ENCODE measurements at regions of chr10 and their contacts with region 1.

Region 1: DNA sequence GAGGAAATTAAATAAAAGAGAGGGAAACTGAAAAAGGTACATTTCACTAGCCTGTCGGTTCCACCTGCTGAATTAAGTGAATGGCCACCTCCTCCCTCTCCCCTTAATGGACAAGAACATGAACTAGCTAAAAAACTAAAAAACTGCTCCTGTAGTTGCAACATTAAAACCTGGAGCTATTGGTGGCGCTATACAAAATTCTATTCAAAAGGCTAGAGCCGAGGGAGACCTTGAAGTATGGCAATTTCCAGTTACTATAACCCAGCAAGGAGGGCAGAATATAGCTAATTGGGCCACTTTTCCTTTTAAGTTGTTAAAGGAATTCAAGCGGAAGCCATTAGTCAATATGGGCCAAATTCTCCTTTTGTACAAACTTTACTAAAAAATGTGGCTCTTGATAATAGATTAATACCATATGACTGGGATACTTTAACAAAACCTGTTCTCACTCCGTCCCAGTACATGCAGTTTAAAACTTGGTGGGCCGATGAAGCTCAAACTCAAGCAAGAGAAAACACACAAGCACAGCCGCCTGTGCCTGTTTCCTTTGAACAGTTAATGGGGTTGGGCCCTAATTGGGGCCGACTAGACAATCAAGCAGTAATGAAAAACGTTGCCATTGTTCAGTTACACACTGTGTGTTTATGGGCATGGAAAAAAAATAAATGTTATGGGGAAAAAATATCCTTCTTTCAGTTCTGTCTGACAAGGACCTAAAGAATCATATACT is 6.5 kb upstream of the CHST3 start:
- DNase-seq: no peak
- ATAC-seq: no peak
- H3K4me3 ChIP-seq: no peak overlapping the region
- H3K27ac ChIP-seq: no peak overlapping the region
- H3K4me1 ChIP-seq: peaks cover 3% of the 10 kb centered on the region
- H3K27me3 ChIP-seq: no peaks in the 10 kb centered on the region

Region 2: GRCh38 chr10:72043016-72043834 is 85.5 kb after region 1 on chr10:
- intact Hi-C with region 1: loop called (anchors 2 to 5 kb)
- DNase-seq: no peak
- ATAC-seq: no peak
- H3K4me3 ChIP-seq: no peak overlapping the region
- H3K27ac ChIP-seq: no peak overlapping the region
- H3K4me1 ChIP-seq: no peaks in the 10 kb centered on the region
- H3K27me3 ChIP-seq: no peaks in the 10 kb centered on the region

Region 3: GRCh38 chr10:72297968-72298773 is 340.5 kb after region 1 on chr10:
- intact Hi-C with region 1: no loop called
- DNase-seq: peak; percentile 99 to 100 (median 99)
- ATAC-seq: peak; percentile 97
- H3K4me3 ChIP-seq: peak overlapping the region; percentile 51
- H3K27ac ChIP-seq: peak overlapping the region; percentile 94
- H3K4me1 ChIP-seq: no peaks in the 10 kb centered on the region
- H3K27me3 ChIP-seq: no peaks in the 10 kb centered on the region